ENCODE measurements at regions of chr3 and their contacts with region 1.

Region 1: GRCh38 chr3:122258757-122259371 is 66.2 kb upstream of the CSTA start:
- DNase-seq: peak; percentile 53 to 71
- ATAC-seq: peak in 3 of 4 donors; percentile 53 to 80 (median 76)
- H3K4me3 ChIP-seq: no peak overlapping the region
- H3K27ac ChIP-seq: no peak overlapping the region
- H3K4me1 ChIP-seq: peaks cover 3% of the 10 kb centered on the region
- H3K27me3 ChIP-seq: no peaks in the 10 kb centered on the region
- CTCF ChIP-seq: peak; percentile 56

Region 2: GRCh38 chr3:122101646-122102045 is 157.2 kb before region 1 on chr3:
- intact Hi-C with region 1: loop called in 1 of 2 experiments (anchors 5 kb)
- DNase-seq: no peak
- ATAC-seq: no peak
- H3K4me3 ChIP-seq: no peak overlapping the region
- H3K27ac ChIP-seq: no peak overlapping the region
- H3K4me1 ChIP-seq: no peaks in the 10 kb centered on the region
- H3K27me3 ChIP-seq: peaks cover 0 to 3% (median 2%) of the 10 kb centered on the region in 3 donors
- CTCF ChIP-seq: peak; percentile 33

Measured in psoas muscle (tissue), 8 donors.